Calu3 (cell line): ENCODE measurements at regions of chr3 and their contacts with region 1.

Region 1: DNA sequence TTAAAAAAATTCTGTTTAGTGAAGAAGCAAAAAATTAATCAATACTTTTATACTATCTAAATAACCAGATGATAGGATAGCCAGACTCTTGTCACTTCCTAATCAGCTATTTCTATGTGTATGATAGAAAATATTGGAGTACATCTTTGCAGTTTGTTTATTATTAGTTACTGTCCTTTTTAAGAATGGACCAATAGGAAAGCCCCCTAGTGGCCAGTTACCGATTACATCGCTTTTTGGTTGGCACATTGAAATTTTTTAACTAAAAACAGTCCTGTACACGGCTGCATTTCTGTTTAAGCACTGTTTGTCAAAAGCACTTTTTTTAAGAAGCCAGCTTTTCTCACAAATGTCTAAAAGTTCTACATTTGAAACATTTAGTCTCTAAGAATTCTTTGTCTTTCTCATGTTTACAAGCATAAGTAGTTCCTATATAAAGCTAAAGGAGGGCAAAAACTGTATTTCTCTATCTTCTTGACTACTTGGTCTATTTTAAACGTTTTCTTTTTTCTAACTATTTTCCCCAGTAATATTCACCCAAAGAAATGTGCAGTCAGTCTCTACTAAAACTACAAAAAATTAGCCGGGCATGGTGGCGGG is 253.2 kb upstream of the LRTM1 start:
- DNase-seq: peak; percentile 34
- H3K4me3 Mint-ChIP-seq: no peak overlapping the region
- H3K27ac Mint-ChIP-seq: no peak overlapping the region
- H3K4me1 Mint-ChIP-seq: no peaks in the 10 kb centered on the region
- H3K27me3 Mint-ChIP-seq: no peaks in the 10 kb centered on the region
- CTCF ChIP-seq: no peak

Region 2: DNA sequence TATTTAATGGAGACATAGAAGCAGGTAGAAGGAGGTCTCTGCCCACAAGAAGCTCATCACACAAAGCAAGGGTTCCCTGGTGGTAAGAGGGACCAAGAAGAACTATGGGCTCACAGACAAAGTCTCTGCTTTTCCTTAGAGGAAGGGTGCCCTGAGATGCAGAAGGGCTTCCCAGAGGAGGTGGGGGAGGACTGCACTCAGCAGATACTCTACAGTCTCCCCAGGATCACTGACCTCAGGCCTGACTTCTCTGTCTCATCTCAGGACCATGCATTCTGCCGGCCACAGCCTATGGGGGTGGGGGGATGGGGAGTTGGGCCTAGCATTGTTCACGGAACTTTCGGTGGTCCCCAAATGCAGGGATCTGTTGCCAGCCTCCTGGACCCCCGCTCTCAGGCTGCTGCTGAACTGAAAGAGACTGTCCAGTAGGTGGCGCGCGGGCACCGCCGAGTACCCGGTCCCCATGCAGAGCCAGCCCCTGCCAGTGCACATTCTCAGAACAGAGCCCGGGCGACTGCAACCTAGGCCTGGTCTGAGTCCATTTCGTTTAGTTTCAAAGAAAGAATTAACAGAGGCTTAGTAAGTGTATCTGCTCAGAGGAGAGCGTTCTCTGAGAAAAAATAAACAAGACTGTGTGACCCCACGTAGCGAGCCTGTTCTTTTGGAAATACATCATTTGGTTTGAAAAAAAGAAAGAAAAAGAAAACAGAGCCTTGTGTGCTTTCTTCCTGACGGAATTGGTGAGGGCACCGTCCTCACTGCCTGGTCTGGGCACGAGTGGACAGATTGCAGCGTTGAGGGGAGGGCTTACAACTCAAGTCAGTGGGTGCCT is 327.2 kb before region 1 on chr3:
- CTCF ChIA-PET with region 1: no interaction called
- intact Hi-C with region 1: loop called (anchors 5 kb)
- DNase-seq: peak; percentile 71
- H3K4me3 Mint-ChIP-seq: no peak overlapping the region
- H3K27ac Mint-ChIP-seq: no peak overlapping the region
- H3K4me1 Mint-ChIP-seq: no peaks in the 10 kb centered on the region
- H3K27me3 Mint-ChIP-seq: peaks cover 14% of the 10 kb centered on the region
- CTCF ChIP-seq: peak; percentile 75

Region 3: DNA sequence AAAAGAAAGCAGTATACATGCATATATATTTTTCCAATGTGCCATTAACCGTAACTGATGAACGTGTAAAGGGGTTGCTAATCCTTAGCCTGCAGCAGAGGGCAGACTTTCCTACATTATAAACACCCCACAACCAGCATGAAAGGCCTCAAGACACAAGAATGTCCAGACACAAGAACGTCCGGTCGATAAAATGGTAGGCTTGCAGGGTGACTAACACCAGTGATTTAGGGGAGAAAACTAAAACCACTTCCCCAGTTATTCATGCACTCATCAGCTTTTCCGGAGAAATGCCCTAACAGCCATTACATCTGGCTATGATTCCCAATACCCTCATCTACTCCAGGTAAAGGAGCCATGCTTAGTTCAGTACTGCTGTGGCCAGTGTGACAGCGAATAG is 310.6 kb before region 1 on chr3:
- CTCF ChIA-PET with region 1: no interaction called
- intact Hi-C with region 1: loop called (anchors 5 kb)
- DNase-seq: peak; percentile 10
- H3K4me3 Mint-ChIP-seq: no peak overlapping the region
- H3K27ac Mint-ChIP-seq: no peak overlapping the region
- H3K4me1 Mint-ChIP-seq: no peaks in the 10 kb centered on the region
- H3K27me3 Mint-ChIP-seq: peaks cover 19% of the 10 kb centered on the region
- CTCF ChIP-seq: no peak

Region 4: DNA sequence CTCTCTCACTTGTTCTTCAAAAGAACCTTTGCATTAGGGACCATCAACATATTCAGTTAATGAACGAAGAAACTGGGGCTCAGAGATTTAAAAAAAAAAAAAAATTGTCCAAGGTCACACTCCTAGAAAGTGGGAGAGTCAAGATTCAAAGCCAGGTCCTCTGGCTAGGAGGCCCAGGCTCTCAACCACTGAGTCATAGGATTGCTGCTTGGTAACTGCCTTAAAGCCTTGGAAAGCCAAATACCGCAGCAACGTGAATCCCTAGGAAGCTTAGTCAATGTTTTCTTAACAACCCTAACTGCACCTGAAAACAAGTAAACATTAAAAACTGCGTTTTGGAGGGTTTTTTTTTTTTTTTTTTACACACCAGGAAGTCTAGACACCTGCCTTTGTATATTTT is 149.3 kb after region 1 on chr3:
- CTCF ChIA-PET with region 1: no interaction called
- intact Hi-C with region 1: no loop called
- DNase-seq: no peak
- H3K4me3 Mint-ChIP-seq: no peak overlapping the region
- H3K27ac Mint-ChIP-seq: no peak overlapping the region
- H3K4me1 Mint-ChIP-seq: no peaks in the 10 kb centered on the region
- H3K27me3 Mint-ChIP-seq: no peaks in the 10 kb centered on the region
- CTCF ChIP-seq: no peak